ENCODE measurements at regions of chr13 and their contacts with region 1.

Region 1: GRCh38 chr13:95834134-95834765 is 157.3 kb downstream of the DNAJC3 start:
- DNase-seq: peak; percentile 66 to 81
- ATAC-seq: peak; percentile 84
- H3K4me3 ChIP-seq: no peak overlapping the region
- H3K27ac ChIP-seq: no peak overlapping the region
- H3K4me1 ChIP-seq: no peaks in the 10 kb centered on the region
- H3K27me3 ChIP-seq: no peaks in the 10 kb centered on the region

Region 2: GRCh38 chr13:94822356-94822755 is 1011.9 kb before region 1 on chr13:
- intact Hi-C with region 1: no loop called
- DNase-seq: no peak
- ATAC-seq: no peak
- H3K4me3 ChIP-seq: no peak overlapping the region
- H3K27ac ChIP-seq: no peak overlapping the region
- H3K4me1 ChIP-seq: no peaks in the 10 kb centered on the region
- H3K27me3 ChIP-seq: no peaks in the 10 kb centered on the region

Region 3: DNA sequence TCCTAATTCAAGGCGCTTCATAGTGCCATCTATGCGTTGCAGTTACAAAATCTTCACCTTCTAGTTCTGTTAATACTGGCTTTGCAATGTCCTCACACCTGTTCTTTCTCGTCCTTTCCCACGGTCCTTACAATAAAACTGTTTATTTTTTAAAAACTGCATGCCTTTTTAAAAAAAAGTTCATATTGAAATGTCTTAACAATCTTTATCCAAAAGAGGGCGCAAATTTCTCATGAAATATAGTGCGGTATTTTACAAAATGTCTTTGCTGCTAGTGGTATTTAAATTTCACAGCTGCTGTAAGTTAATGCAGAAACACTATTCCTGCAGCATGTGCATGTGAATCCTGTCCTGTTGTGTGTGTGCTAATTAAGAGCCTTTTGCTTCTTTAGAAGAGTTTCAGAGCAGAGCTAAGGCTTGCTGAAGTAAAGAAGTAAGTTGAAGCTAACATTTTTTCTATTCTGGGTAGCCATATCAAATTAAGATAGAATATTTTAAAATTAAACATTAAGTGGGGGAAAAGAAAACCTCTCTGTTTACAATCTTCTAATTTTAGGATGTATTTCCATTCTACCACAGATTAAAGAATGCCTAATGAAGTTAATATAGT is 297.5 kb before region 1 on chr13:
- intact Hi-C with region 1: loop called in 1 of 2 experiments (anchors 10 kb)
- DNase-seq: no peak
- ATAC-seq: no peak
- H3K4me3 ChIP-seq: no peak overlapping the region
- H3K27ac ChIP-seq: no peak overlapping the region
- H3K4me1 ChIP-seq: peaks cover 0 to 4% of the 10 kb centered on the region in 2 donors
- H3K27me3 ChIP-seq: no peaks in the 10 kb centered on the region

Region 4: DNA sequence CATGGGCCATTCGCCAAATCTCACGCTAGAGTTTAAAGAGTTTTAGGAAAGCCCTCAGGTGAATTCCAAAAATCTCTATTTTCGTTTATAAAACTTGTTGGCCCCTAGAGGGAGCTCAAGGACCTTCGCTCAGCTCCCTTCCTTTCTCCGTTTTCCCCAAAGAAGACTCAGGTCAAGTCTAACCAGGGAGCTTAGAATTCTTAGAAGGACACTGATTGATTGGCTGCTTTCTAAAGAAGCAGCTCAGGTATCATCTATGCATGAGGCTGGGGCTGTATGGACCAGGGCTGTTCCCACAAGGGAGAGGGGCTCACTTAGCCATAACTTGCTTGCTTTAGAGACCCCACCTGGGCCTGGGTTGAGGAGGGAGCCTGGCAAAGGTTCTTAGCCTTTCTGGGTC is 210.2 kb before region 1 on chr13:
- intact Hi-C with region 1: loop called (anchors 2 kb)
- DNase-seq: no peak
- ATAC-seq: peak; percentile 74
- H3K4me3 ChIP-seq: no peak overlapping the region
- H3K27ac ChIP-seq: no peak overlapping the region
- H3K4me1 ChIP-seq: no peaks in the 10 kb centered on the region
- H3K27me3 ChIP-seq: no peaks in the 10 kb centered on the region